Mammary epithelial cell (primary cell): ENCODE measurements at regions of chr11 and their contacts with region 1.

Region 1: DNA sequence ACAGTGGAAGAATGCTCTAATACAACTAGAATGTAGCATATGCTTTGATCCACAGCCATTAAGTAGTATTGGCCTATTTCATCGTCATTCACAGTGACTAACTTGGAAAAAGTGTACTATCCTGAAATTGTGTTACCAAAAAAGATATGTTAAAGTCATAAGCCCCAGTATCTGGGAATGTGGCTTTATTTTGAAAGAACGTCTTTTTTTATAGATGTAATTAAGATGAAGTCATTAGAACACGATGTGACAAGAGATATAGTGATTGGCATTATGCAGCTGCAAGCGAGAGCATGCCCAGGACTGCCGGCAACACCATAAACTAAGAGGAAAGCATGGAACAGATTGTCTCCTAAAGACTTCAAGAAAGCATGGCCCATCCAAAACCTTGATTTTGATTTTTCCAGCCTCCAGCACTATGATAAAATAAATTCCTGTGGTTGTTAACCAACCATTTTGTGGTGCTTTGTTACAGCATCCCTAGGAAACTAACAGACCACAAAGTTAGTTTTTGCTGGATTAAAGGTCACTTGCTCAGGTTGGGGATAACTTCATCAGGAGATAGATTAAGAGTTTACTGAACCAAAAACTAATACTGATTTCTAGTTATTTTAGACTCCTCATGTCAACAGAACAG is 870.6 kb upstream of the LRRC4C start:
- DNase-seq: peak; percentile 84
- H3K4me3 ChIP-seq: no peak overlapping the region
- H3K27ac ChIP-seq: peak overlapping the region; percentile 6
- H3K4me1 ChIP-seq: peaks cover 18% of the 10 kb centered on the region
- H3K27me3 ChIP-seq: no peaks in the 10 kb centered on the region
- CTCF ChIP-seq: no peak

Region 2: GRCh38 chr11:42054351-42054900 is 275.6 kb before region 1 on chr11:
- CTCF ChIA-PET with region 1: no interaction called
- dilution Hi-C with region 1: no loop called
- in situ Hi-C with region 1: no loop called
- intact Hi-C with region 1: no loop called
- DNase-seq: no peak
- H3K4me3 ChIP-seq: no peak overlapping the region
- H3K27ac ChIP-seq: no peak overlapping the region
- H3K4me1 ChIP-seq: no peaks in the 10 kb centered on the region
- H3K27me3 ChIP-seq: no peaks in the 10 kb centered on the region
- CTCF ChIP-seq: no peak

Region 3: GRCh38 chr11:42110354-42110753 is 219.7 kb before region 1 on chr11:
- CTCF ChIA-PET with region 1: no interaction called
- dilution Hi-C with region 1: no loop called
- in situ Hi-C with region 1: no loop called
- intact Hi-C with region 1: no loop called
- DNase-seq: no peak
- H3K4me3 ChIP-seq: no peak overlapping the region
- H3K27ac ChIP-seq: no peak overlapping the region
- H3K4me1 ChIP-seq: no peaks in the 10 kb centered on the region
- H3K27me3 ChIP-seq: no peaks in the 10 kb centered on the region
- CTCF ChIP-seq: no peak

Region 4: GRCh38 chr11:42237701-42238235 is 92.3 kb before region 1 on chr11:
- CTCF ChIA-PET with region 1: no interaction called
- dilution Hi-C with region 1: no loop called
- in situ Hi-C with region 1: no loop called
- intact Hi-C with region 1: loop called (anchors 1 kb)
- DNase-seq: peak; percentile 62
- H3K4me3 ChIP-seq: no peak overlapping the region
- H3K27ac ChIP-seq: peak overlapping the region; percentile 34
- H3K4me1 ChIP-seq: peaks cover 42% of the 10 kb centered on the region
- H3K27me3 ChIP-seq: no peaks in the 10 kb centered on the region
- CTCF ChIP-seq: no peak

Region 5: DNA sequence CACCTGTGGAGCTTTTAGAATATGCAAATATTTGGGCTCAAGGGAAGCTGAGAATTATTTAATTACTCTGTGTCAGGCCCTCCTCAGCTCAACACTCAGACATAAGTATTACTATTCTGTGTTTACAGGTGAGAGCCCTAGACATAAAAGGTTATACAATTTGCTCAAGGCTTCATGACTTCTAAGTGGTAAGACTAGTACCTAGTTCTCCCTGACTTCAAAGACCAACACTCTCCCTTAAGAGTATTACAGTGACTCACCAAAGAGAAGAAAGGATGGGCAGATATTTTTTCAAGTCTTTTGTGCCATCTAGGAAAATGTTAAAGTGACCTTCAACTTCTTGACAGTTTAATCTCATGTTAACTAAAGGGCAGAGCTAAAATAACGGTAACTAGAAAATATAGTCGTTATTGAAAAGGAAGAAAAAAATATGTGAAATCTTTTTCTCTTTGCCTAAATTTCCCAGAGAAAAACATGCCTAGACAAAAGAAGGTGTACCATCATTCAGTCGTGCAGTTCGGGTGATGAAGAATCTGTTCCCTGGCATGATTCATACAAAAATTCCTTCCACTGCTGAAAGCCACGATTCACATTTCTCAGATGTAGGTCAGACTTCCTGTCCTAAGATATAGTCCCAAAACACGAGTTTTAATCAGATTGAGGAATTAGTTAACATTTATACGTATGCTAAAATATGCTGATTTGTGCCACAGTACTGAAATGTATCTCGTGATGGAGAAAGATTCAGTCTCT is 132.7 kb after region 1 on chr11:
- CTCF ChIA-PET with region 1: no interaction called
- dilution Hi-C with region 1: no loop called
- in situ Hi-C with region 1: no loop called
- intact Hi-C with region 1: loop called (anchors 10 kb)
- DNase-seq: peak; percentile 70
- H3K4me3 ChIP-seq: no peak overlapping the region
- H3K27ac ChIP-seq: peak overlapping the region; percentile 56
- H3K4me1 ChIP-seq: peaks cover 15% of the 10 kb centered on the region
- H3K27me3 ChIP-seq: no peaks in the 10 kb centered on the region
- CTCF ChIP-seq: no peak